ENCODE measurements at regions of chr22 and their contacts with region 1.

Region 1: DNA sequence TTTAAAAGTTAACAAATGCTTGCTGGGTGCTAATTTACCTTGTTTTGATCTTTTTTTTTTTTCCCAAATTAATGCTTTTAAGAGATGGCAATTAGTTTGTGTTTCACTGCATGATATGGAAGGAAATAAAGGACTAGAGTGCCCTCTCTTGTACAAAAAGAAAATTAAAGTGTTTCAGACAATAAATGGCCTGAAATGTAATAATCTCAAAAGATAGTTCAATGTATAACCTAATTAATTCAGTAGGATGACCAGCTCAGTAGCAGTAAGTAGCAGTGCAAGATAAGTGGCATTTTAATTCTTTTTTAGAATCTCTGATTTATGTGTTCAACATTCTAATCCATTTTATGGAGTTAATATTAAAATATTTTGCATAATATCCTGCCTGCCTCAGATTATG is 39.9 kb upstream of the MYO18B start:
- DNase-seq: no peak
- H3K4me3 Mint-ChIP-seq: no peak overlapping the region
- H3K27ac Mint-ChIP-seq: no peak overlapping the region
- H3K4me1 Mint-ChIP-seq: peaks cover 9% of the 10 kb centered on the region
- H3K27me3 Mint-ChIP-seq: no peaks in the 10 kb centered on the region

Region 2: DNA sequence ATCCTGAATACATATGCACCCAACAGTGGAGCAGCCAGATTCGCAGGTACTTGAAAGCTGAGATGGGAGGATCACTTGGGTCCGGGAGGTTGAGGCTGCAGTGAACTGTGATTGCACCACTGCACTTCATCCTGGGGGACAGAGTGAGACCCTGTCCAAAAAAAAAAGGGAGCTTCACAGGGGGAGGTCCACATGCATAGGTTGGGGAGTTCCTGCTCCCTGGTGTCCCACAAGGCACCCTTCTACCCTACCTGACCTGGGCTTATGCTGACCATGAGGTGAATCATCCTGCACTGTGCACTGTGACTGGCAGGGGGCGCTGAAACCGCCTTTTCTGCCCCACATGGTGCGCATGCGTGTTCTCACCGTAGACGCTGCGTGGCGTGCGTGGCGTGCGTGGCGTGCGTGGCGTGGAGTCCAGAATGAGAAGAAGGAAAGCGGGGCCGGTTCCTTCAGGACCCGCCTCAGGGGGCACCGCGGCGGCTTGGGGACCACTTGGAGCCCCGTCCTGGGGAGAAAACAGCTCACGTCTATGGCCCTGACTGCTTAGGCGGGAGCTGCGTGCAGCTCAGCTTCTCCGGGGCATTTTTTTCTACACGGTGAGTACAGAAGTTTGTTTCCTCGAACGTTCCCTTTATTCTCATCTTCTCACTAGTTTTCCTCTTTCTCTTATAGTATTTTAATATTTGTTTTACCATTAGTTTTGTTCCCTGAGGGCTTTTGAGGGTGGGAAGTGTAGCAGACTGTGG is 254.2 kb before region 1 on chr22:
- CTCF ChIA-PET with region 1: interaction called, 3 read pairs
- intact Hi-C with region 1: loop called (anchors 5 kb)
- DNase-seq: peak; percentile 94
- H3K4me3 Mint-ChIP-seq: peak overlapping the region; percentile 86
- H3K27ac Mint-ChIP-seq: peak overlapping the region; percentile 91
- H3K4me1 Mint-ChIP-seq: peaks cover 42% of the 10 kb centered on the region
- H3K27me3 Mint-ChIP-seq: no peaks in the 10 kb centered on the region

Region 3: DNA sequence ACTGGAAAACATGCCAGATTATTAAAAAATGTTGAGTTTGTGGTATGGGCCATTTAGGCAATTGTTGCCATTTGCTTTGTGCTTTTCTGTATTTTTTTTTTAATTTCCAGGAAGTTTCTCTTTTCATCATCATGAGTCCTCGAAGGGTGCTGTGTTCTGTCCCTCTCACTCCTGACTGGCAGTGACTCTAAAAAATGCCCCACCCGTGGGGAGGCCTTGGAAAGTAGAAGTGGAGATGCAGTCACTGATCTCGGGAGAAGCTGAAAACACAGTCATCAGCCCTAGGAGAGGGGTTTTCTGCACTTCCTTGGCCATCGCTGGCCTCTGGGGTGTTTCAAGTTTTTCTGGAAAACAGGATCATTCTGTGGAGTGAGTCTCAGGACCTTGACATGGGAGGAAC is 236.1 kb before region 1 on chr22:
- CTCF ChIA-PET with region 1: interaction called, 7 read pairs
- intact Hi-C with region 1: loop called (anchors 1 kb)
- DNase-seq: no peak
- H3K4me3 Mint-ChIP-seq: no peak overlapping the region
- H3K27ac Mint-ChIP-seq: no peak overlapping the region
- H3K4me1 Mint-ChIP-seq: peaks cover 2% of the 10 kb centered on the region
- H3K27me3 Mint-ChIP-seq: no peaks in the 10 kb centered on the region

Region 4: GRCh38 chr22:25564320-25564978 is 137.6 kb before region 1 on chr22 and contains the start of gene GRK3:
- CTCF ChIA-PET with region 1: no interaction called
- intact Hi-C with region 1: loop called (anchors 2 kb)
- DNase-seq: peak; percentile 76
- H3K4me3 Mint-ChIP-seq: peak within 1 kb of the TSS; percentile 85
- H3K27ac Mint-ChIP-seq: peak within 1 kb of the TSS; percentile 60
- H3K4me1 Mint-ChIP-seq: peaks cover 41% of the 10 kb centered on the region
- H3K27me3 Mint-ChIP-seq: peaks cover 4% of the 10 kb centered on the region
- total RNA-seq, gene GRK3: 8.3 to 8.9 TPM

Region 5: DNA sequence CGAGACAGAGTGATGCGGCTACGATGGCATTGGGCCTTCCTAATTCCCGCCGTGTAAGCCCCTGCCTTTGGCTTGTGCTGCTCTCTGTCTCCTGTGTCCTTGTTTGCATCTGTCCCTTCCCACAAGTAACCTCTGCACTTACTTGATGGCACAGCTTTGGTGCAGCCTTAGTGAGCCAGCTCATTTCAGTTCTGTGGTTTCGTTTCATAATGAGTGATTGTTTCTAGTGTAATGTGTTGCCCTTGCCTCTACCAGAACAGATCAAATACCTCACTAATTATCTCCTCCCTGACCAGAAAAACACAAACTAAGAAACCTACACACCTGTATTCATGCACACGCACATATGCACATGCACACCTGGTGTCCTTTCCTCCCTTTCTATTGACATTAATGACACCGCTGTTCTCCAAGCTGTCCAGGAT is 78.7 kb before region 1 on chr22:
- CTCF ChIA-PET with region 1: no interaction called
- intact Hi-C with region 1: loop called (anchors 5 kb)
- DNase-seq: peak; percentile 45
- H3K4me3 Mint-ChIP-seq: no peak overlapping the region
- H3K27ac Mint-ChIP-seq: no peak overlapping the region
- H3K4me1 Mint-ChIP-seq: peaks cover 18% of the 10 kb centered on the region
- H3K27me3 Mint-ChIP-seq: no peaks in the 10 kb centered on the region

Region 6: GRCh38 chr22:25736378-25737011 is 34.5 kb after region 1 on chr22:
- CTCF ChIA-PET with region 1: no interaction called
- intact Hi-C with region 1: loop called (anchors 2 kb)
- DNase-seq: peak; percentile 83
- H3K4me3 Mint-ChIP-seq: peak overlapping the region; percentile 51
- H3K27ac Mint-ChIP-seq: peak overlapping the region; percentile 89
- H3K4me1 Mint-ChIP-seq: peaks cover 36% of the 10 kb centered on the region
- H3K27me3 Mint-ChIP-seq: peaks cover 6% of the 10 kb centered on the region

Region 7: GRCh38 chr22:25772288-25772687 is 70.2 kb after region 1 on chr22:
- CTCF ChIA-PET with region 1: interaction called, 4 read pairs
- intact Hi-C with region 1: loop called (anchors 2 kb)
- DNase-seq: no peak
- H3K4me3 Mint-ChIP-seq: no peak overlapping the region
- H3K27ac Mint-ChIP-seq: no peak overlapping the region
- H3K4me1 Mint-ChIP-seq: peaks cover 14% of the 10 kb centered on the region
- H3K27me3 Mint-ChIP-seq: peaks cover 2% of the 10 kb centered on the region